ENCODE measurements at regions of chr12 and their contacts with region 1.

Region 1: GRCh38 chr12:2034633-2035430 is 18.0 kb upstream of the CACNA1C start:
- DNase-seq: peak; percentile 91 to 97 (median 95)
- ATAC-seq: peak; percentile 90 to 94
- H3K4me3 ChIP-seq: peak overlapping the region; percentile 34
- H3K27ac ChIP-seq: no peak overlapping the region
- H3K4me1 ChIP-seq: peaks cover 6% of the 10 kb centered on the region
- H3K27me3 ChIP-seq: no peaks in the 10 kb centered on the region

Region 2: GRCh38 chr12:1804545-1805332 is 230.1 kb before region 1 on chr12:
- intact Hi-C with region 1: loop called in 1 of 4 experiments (anchors 5 kb)
- DNase-seq: peak; percentile 92 to 96 (median 94)
- ATAC-seq: peak; percentile 85 to 91
- H3K4me3 ChIP-seq: no peak overlapping the region
- H3K27ac ChIP-seq: peak overlapping the region; percentile 2
- H3K4me1 ChIP-seq: no peaks in the 10 kb centered on the region
- H3K27me3 ChIP-seq: no peaks in the 10 kb centered on the region

Region 3: DNA sequence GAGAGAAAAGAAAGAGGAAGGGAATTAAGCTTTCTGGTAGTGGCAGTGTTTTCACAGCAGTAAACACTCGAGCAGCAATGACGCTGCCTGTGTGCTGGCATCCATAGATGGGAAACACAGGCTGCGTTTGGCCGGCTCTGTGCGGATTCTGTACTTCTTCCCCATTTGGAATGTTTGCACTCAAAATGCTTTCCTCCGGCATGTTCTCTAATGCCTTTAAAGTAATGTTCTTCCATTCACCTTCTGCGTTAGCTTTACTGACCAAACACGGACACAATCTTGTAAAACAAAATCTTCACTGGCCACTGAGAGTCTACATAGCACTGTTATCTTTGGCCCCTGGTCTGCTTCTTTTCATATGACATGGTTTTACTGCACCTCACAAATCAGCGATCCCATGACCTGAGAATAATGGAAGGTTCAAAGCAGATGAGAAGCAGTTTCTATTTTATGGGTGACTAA is 61.9 kb before region 1 on chr12:
- intact Hi-C with region 1: loop called in 2 of 4 experiments (anchors 5 kb)
- DNase-seq: peak; percentile 29 to 80 (median 65)
- ATAC-seq: peak; percentile 72 to 76
- H3K4me3 ChIP-seq: peak overlapping the region; percentile 65
- H3K27ac ChIP-seq: peak overlapping the region; percentile 98
- H3K4me1 ChIP-seq: no peaks in the 10 kb centered on the region
- H3K27me3 ChIP-seq: no peaks in the 10 kb centered on the region

Region 4: DNA sequence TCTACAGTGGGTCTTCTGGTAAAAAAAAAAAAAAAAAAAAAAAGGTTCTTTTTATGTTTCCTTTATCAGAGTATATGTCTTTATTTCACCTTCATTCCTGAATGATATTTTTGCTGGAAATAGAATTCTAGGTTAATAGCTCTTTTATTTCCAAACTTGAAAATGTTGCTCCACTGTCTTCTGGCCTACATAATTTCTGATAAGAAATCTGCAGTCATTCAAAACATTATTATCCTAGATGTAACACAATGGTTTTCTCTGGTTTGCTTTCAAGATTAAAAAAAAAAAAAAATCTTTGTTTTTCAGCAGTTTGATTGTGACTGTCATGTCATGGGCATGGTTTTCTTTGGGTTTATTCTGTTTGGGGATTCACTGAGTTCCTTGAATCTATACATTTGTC is 50.1 kb before region 1 on chr12:
- intact Hi-C with region 1: loop called in 2 of 4 experiments (anchors 5 to 10 kb)
- DNase-seq: no peak
- ATAC-seq: no peak
- H3K4me3 ChIP-seq: no peak overlapping the region
- H3K27ac ChIP-seq: no peak overlapping the region
- H3K4me1 ChIP-seq: no peaks in the 10 kb centered on the region
- H3K27me3 ChIP-seq: no peaks in the 10 kb centered on the region

Measured in right cardiac atrium (tissue), 5 donors.